Naive thymus-derived CD4-positive, alpha-beta T cell (primary cell): ENCODE measurements at regions of chr2 and their contacts with region 1.

Region 1: GRCh38 chr2:240579771-240580614 is 6.5 kb upstream of the CAPN10 start:
- DNase-seq: peak; percentile 52 to 81 (median 67)
- ATAC-seq: peak; percentile 91
- H3K4me3 ChIP-seq: no peak overlapping the region
- H3K4me3 Mint-ChIP-seq: peak overlapping the region in 9 of 10 donors; percentile 9 to 58 (median 45)
- H3K27ac ChIP-seq: peak overlapping the region; percentile 33
- H3K27ac Mint-ChIP-seq: peak overlapping the region; percentile 36 to 87 (median 78)
- H3K4me1 ChIP-seq: peaks cover 19 to 22% of the 10 kb centered on the region in 2 donors
- H3K4me1 Mint-ChIP-seq: peaks cover 33 to 62% (median 48%) of the 10 kb centered on the region in 7 donors
- H3K27me3 ChIP-seq: no peaks in the 10 kb centered on the region
- H3K27me3 Mint-ChIP-seq: no peaks in the 10 kb centered on the region

Region 2: DNA sequence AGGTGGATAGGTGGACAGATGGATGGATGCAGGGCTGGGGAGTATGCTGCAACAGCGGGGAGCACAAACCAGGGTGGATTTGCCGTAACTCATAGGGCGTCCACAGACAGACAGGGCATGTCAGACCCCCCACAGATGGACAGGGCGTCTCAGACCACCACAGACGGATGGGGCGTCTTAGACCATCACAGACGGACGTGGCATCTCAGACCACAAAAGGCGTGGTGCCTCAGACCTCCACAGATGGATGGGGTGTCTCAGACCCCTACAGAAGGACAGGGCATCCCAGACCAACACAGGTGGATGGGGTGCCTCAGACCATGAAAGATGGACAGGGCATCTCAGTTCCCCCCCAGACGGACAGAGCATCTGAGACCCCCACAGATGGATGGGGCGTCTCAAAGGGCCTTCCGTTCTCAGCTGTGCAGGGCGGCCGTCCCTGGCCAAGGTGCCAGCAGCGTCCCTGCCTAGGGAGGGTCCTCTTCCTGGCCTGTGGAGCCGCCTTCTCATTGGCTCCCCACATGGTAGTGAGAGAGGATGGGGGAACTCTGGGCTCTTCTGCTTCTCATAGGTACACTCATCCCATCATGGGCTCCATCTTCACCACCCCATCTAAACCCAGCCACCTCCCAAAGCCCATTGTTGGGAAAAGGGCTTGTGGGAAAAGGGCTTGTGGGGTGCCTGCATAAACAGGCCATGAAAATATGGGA is 24.3 kb before region 1 on chr2:
- CTCF ChIA-PET with region 1: interaction called, 8 read pairs
- POLR2A ChIA-PET with region 1: interaction called, 264 read pairs
- intact Hi-C with region 1: loop called in 1 of 2 experiments (anchors 1 kb)
- DNase-seq: no peak
- ATAC-seq: no peak
- H3K4me3 ChIP-seq: no peak overlapping the region
- H3K4me3 Mint-ChIP-seq: peak overlapping the region in 1 of 10 donors; percentile 25
- H3K27ac ChIP-seq: no peak overlapping the region
- H3K27ac Mint-ChIP-seq: no peak overlapping the region
- H3K4me1 ChIP-seq: peaks cover 27 to 31% of the 10 kb centered on the region in 2 donors
- H3K4me1 Mint-ChIP-seq: peaks cover 28 to 43% (median 38%) of the 10 kb centered on the region in 7 donors
- H3K27me3 ChIP-seq: no peaks in the 10 kb centered on the region
- H3K27me3 Mint-ChIP-seq: no peaks in the 10 kb centered on the region